ENCODE measurements at regions of chr19 and their contacts with region 1.

Region 1: GRCh38 chr19:54357381-54357780 is 7.3 kb downstream of the LAIR1 start:
- DNase-seq: no peak
- H3K4me3 ChIP-seq: no peak overlapping the region
- H3K27ac ChIP-seq: no peak overlapping the region
- H3K4me1 ChIP-seq: peaks cover 8 to 44% (median 29%) of the 10 kb centered on the region in 4 experiments
- H3K27me3 ChIP-seq: no peaks in the 10 kb centered on the region

Region 2: DNA sequence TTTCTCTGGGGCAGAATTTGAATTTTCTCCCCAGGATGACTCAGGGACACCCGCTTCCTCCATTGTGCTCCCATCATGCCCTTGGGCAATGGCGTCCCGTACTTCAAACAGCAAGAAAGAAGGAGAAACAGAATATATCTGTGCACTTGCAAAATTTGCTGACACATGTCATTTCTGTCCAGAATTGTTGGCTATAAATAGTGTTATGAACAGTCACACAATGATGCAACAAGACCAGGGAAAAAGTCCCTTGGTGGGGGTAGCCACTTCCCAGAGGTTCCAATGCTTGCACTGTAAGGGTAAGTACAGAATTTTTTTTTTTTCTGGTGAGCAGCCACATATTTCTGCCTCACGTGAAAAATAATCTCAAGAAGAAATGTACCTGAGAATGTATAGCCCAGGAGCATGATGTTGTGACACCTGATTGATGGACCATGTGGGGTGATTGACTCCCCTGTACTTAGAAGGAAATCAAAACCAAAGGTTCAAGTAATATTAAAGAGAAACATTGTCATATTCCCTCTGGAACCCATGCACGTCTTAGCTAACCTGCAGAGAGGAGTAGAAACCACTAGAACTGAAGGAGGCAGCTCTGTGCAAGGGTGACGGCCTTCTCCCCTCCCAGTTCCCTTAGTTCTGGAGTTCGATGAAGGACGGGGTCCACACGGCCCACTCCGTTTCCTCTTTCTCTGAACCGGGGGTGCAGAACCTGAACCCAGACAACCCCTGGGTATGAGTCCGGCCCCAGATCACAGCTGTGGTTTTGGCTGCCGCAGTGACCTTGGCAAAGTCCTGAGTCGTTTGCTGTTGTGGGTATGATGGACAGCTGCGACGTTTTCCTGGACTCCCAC is 16.6 kb after region 1 on chr19:
- CTCF ChIA-PET with region 1: interaction called, 10 read pairs
- POLR2A ChIA-PET with region 1: interaction called, 3 read pairs
- DNase-seq: peak in 2 of 3 donors; percentile 85 to 87
- H3K4me3 ChIP-seq: peak overlapping the region in 2 of 7 experiments; percentile 16 to 19
- H3K27ac ChIP-seq: no peak overlapping the region
- H3K4me1 ChIP-seq: peaks cover 42 to 84% (median 76%) of the 10 kb centered on the region in 4 experiments
- H3K27me3 ChIP-seq: no peaks in the 10 kb centered on the region